Activated T-helper 1 cell treated with anti-CD3 and anti-CD28 coated beads, Interleukin-12 subunit alpha, Interleukin-12 subunit beta, Interleukin-2, Interleukin-4 antibody, amounts not matched to agents 30 ng/mL and 10 ng/mL and 1 ng/mL, durations not matched to agents 14 hours and 24 hours and 36 hours (primary cell): ENCODE measurements at regions of chr4 and their contacts with region 1.

Region 1: DNA sequence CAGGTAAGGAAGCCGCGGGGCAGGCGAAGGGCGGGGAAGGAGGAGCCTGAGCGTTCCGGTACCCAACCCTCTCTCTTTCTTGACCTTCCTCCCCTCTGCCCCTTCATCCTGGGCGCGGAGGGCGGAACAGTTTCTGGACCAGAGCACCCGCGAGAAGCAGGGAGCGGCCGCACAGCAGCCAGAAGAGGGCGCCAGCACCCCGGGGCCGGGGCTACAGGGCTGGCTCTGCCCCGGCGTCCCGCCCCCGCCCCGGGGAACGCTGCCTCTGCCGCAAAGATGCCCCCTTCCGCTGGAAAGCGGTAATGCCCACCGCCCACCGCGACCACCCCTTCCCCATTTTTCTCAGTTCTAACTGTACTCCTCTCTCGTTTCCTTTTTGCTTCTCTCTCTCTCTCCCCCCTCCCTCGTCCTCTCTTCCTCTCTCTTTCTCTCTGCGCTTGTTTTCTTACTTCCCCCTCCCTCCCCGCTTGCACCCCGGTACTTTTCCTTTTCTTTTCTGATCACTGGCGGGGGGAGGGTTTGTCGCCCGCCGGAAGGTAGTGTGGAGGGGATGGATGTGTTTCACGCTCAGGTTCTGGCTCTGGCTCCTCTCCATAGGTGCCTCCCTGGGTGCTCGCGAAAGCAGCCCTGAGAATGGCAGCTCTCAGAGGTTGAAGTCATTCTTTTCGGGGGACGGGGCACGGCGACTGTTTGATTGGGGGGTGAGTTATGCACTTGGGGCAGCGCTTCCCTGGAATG is 13.1 kb upstream of the PRDM8 start:
- DNase-seq: peak; percentile 92
- H3K4me3 Mint-ChIP-seq: peak overlapping the region; percentile 98
- H3K27ac Mint-ChIP-seq: peak overlapping the region; percentile 98
- H3K4me1 Mint-ChIP-seq: peaks cover 70% of the 10 kb centered on the region
- H3K27me3 Mint-ChIP-seq: peaks cover 15% of the 10 kb centered on the region

Region 2: DNA sequence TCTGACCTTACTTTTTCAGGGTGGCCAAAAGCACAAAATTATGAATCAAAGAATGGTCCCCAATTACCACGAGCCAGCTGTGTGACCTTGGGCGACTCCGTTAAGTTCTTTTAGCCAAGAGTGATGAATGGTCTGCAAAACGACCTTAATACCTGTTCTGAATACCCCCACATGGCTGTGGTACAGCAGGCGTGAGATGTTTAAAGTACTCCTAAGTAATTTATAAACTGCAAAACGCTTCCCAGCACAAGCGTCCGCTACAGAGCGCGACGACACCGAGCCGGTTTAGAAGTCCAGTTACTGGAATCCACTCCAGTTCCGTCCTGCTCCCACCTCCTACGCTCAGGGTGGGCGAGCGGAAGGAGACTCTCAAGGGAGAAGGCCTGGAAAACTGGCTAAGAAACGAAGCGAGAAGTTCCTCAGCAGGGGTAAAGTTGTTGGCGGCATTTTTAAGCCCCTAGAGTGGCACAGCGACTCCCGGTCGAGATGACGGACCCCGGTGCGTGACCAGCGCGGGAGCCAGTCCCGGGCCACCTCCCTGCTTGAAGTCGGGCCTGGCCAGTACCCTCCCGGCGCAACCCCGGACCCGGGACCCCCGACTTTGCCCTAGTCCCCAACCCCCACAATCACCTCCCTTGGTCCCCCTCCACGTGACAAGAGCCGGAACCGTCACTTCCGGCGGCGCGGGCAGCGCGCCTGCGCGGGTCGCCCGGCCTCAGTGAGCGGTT is 1408.8 kb before region 1 on chr4:
- intact Hi-C with region 1: loop called (anchors 10 kb)
- DNase-seq: peak; percentile 86
- H3K4me3 Mint-ChIP-seq: peak overlapping the region; percentile 95
- H3K27ac Mint-ChIP-seq: peak overlapping the region; percentile 96
- H3K4me1 Mint-ChIP-seq: peaks cover 38% of the 10 kb centered on the region
- H3K27me3 Mint-ChIP-seq: no peaks in the 10 kb centered on the region

Region 3: GRCh38 chr4:79917246-79917645 is 267.0 kb before region 1 on chr4:
- intact Hi-C with region 1: loop called (anchors 10 kb)
- DNase-seq: peak; percentile 25
- H3K4me3 Mint-ChIP-seq: no peak overlapping the region
- H3K27ac Mint-ChIP-seq: no peak overlapping the region
- H3K4me1 Mint-ChIP-seq: peaks cover 36% of the 10 kb centered on the region
- H3K27me3 Mint-ChIP-seq: no peaks in the 10 kb centered on the region

Region 4: DNA sequence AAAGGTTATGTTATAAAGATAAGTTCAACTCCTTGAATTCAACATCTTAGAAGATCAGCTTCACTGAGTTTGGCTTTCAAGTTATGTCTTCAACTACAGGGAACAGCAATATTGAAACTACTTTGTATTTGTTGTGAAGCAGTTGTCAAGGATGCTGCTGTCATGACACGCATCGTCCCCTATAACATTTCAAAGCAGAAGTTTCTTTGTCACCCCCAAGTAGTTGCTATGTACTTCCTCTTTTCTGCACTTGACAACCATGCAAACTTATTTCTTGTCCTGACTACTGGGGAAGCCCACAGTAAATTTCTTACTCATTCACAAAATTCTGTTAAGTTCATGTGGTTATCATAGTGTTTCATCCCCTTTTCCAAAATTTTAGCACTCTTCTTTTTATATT is 125.5 kb before region 1 on chr4:
- intact Hi-C with region 1: loop called (anchors 1 kb)
- DNase-seq: peak; percentile 52
- H3K4me3 Mint-ChIP-seq: peak overlapping the region; percentile 82
- H3K27ac Mint-ChIP-seq: peak overlapping the region; percentile 99
- H3K4me1 Mint-ChIP-seq: peaks cover 73% of the 10 kb centered on the region
- H3K27me3 Mint-ChIP-seq: no peaks in the 10 kb centered on the region

Region 5: DNA sequence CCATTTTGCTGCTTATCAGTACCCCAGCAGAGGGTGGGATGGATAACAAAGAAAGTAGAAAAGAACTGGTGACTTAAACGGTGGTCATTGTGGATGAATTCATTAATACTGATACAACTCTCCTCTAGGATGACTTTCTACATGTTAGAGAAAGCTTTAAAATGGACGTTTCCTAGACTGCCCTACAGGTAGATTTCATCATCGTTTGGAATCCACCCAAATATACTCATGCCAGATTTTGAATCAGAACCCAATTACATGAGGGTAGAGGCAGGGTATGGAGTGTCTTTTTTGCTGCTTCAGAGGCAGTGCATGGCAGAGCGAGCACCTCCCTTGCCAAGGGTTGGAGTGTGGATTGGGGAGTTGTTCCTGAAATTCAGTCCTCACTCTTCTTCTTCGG is 97.9 kb before region 1 on chr4:
- intact Hi-C with region 1: no loop called
- DNase-seq: no peak
- H3K4me3 Mint-ChIP-seq: no peak overlapping the region
- H3K27ac Mint-ChIP-seq: no peak overlapping the region
- H3K4me1 Mint-ChIP-seq: peaks cover 13% of the 10 kb centered on the region
- H3K27me3 Mint-ChIP-seq: peaks cover 9% of the 10 kb centered on the region

Region 6: DNA sequence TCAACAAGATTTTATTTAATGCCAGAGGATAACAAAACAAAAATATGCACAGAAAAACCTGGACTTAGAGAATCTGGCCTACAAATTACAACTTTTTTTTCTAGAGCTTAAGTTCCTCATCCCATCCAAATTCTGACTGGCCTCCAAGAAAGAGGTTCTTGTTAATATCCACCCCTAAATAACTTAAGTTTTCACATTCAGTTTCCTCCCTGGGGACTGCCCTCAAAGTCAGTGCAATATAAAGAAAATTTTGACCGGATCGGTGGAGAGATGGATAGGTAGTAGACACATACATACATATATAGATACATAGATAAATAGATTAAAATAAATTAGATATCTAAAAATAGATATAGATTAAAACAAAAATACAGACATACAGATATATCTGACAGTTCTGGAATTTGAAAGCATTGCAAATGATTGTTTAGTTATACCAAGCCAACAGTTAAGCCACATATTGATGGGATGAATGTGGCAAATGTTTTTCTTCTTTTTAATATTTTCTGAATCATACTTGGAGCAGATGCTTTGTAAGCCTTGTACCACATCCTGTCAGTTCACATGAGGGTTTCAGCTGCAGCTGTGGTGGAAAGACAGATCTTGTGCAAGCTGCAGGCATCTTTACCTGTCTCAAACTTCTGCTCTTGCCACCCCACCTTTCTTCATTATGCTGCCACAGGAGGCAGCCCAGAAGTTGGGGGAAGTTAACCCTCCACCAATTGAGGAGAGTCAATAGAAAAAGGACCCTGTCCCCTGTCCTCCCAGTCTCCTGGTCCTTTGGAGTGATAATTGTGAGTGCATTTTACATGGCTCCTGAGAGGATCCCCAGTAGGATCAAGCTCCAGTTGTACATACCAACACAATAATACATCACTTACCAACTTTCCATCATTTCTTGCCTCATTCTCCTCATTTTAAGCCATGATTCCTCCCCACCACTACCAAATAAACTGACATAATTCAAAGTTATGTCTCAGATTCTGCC is 45.4 kb before region 1 on chr4:
- intact Hi-C with region 1: loop called (anchors 1 kb)
- DNase-seq: peak; percentile 62
- H3K4me3 Mint-ChIP-seq: peak overlapping the region; percentile 62
- H3K27ac Mint-ChIP-seq: peak overlapping the region; percentile 88
- H3K4me1 Mint-ChIP-seq: peaks cover 72% of the 10 kb centered on the region
- H3K27me3 Mint-ChIP-seq: no peaks in the 10 kb centered on the region

Region 7: DNA sequence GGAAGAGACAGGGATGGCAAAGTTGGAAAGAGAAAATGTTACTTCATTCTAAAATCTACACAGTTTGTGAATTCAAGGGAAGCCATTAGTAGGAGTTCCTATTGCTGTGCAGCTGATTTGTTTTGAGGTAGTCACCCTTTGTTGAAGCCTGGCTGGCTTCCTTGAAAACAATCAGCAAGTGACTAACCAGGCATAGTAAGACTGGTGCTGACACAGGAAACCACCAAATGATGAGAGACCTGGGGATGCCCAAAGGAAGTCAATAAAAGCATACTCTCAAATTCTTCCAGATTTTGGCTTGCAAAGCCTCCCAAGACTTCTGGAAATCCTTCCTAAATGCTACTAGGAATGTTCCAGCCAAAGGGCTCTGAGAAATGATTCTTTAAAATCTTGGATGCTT is 10.8 kb before region 1 on chr4:
- intact Hi-C with region 1: loop called (anchors 1 kb)
- DNase-seq: peak; percentile 66
- H3K4me3 Mint-ChIP-seq: peak overlapping the region; percentile 50
- H3K27ac Mint-ChIP-seq: peak overlapping the region; percentile 92
- H3K4me1 Mint-ChIP-seq: peaks cover 68% of the 10 kb centered on the region
- H3K27me3 Mint-ChIP-seq: no peaks in the 10 kb centered on the region

Region 8: GRCh38 chr4:80215449-80216052 is 31.3 kb after region 1 on chr4:
- intact Hi-C with region 1: loop called (anchors 1 kb)
- DNase-seq: no peak
- H3K4me3 Mint-ChIP-seq: no peak overlapping the region
- H3K27ac Mint-ChIP-seq: no peak overlapping the region
- H3K4me1 Mint-ChIP-seq: peaks cover 5% of the 10 kb centered on the region
- H3K27me3 Mint-ChIP-seq: peaks cover 45% of the 10 kb centered on the region

Region 9: DNA sequence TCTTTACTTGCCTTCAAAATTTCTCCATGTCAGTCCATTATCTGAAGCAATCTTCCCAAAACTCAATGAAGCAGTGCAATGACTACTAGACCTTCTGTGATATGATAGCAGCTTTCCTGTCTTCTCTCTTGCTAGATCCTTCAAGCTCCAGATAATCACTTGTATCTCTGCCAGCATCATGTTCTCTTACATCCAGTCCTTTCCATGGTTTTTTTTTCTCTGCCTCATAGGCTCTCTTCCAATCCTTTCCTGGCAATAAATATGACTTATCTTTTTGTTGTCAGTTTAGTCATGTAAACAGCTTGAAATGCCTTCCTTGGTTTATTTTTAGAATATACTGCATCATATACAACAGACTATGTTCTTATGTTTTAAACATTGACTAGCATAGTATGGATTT is 344.8 kb after region 1 on chr4:
- intact Hi-C with region 1: no loop called
- DNase-seq: no peak
- H3K4me3 Mint-ChIP-seq: no peak overlapping the region
- H3K27ac Mint-ChIP-seq: no peak overlapping the region
- H3K4me1 Mint-ChIP-seq: no peaks in the 10 kb centered on the region
- H3K27me3 Mint-ChIP-seq: peaks cover 2% of the 10 kb centered on the region